ENCODE measurements at regions of chr2 and their contacts with region 1.

Region 1: DNA sequence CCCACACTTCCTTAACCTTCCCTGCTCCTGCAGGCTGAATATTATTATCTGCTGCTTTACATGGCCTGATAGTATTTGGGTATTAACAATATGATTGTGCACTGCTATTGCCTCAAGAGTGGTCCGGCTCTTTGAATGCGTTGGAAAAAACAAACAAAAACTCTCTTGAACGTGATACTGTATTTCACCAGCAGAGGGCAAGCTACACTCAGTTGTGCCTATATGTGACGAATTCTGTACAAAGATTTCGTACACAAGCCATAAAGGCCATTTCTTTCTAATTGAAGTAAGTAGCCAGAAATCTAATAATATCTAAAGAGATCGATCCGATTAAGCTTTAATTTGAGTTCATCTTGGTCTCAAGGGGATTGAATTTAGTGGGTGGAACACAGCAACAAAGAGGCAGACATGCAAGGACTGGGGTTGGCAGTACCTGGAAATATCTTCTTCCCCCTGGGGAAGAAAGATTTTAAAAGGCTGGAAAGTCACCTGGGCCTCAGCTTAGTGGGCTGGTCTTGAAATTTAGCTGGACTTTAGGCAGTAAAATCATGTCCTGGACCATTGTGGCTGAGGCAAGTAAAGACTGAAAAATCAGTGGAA is 49.3 kb upstream of the RAB6D start:
- DNase-seq: peak; percentile 49
- ATAC-seq: peak; percentile 89
- H3K4me3 ChIP-seq: no peak overlapping the region
- H3K27ac ChIP-seq: no peak overlapping the region
- H3K4me1 ChIP-seq: no peaks in the 10 kb centered on the region; a peak in 1 of 4 replicates
- H3K27me3 ChIP-seq: peaks cover 24% of the 10 kb centered on the region
- CTCF ChIP-seq: peak; percentile 65 to 91 (median 84)
- POLR2A ChIP-seq: no peak
- RAD21 ChIP-seq: peak; percentile 90

Region 2: DNA sequence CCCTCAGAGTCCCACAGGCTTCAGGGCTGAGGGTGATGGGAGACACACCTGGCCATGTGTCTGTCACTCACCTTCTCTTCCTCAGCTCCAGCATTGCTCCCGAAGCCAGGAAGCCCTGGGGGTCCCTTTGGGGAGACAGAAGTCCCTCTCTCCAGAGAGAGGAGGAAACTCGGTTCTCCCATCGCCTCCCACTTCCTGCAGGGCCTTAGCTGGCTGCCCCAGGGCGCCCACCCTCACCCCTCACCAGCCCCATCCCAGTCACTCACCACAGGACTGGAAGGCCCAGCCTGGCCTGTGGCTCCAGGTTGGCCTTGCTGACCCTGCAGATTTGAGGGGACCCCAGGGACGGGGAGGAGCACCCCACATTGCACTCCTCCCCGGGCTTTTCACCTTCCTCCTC is 46.6 kb before region 1 on chr2:
- CTCF ChIA-PET with region 1: no interaction called
- POLR2A ChIA-PET with region 1: no interaction called
- RAD21 ChIA-PET with region 1: no interaction called
- intact Hi-C with region 1: no loop called
- DNase-seq: no peak
- ATAC-seq: no peak
- H3K4me3 ChIP-seq: no peak overlapping the region
- H3K27ac ChIP-seq: no peak overlapping the region
- H3K4me1 ChIP-seq: no peaks in the 10 kb centered on the region
- H3K27me3 ChIP-seq: peaks cover 5% of the 10 kb centered on the region; the same call in 1 of the 2 replicates
- CTCF ChIP-seq: no peak
- POLR2A ChIP-seq: no peak
- RAD21 ChIP-seq: no peak

Region 3: DNA sequence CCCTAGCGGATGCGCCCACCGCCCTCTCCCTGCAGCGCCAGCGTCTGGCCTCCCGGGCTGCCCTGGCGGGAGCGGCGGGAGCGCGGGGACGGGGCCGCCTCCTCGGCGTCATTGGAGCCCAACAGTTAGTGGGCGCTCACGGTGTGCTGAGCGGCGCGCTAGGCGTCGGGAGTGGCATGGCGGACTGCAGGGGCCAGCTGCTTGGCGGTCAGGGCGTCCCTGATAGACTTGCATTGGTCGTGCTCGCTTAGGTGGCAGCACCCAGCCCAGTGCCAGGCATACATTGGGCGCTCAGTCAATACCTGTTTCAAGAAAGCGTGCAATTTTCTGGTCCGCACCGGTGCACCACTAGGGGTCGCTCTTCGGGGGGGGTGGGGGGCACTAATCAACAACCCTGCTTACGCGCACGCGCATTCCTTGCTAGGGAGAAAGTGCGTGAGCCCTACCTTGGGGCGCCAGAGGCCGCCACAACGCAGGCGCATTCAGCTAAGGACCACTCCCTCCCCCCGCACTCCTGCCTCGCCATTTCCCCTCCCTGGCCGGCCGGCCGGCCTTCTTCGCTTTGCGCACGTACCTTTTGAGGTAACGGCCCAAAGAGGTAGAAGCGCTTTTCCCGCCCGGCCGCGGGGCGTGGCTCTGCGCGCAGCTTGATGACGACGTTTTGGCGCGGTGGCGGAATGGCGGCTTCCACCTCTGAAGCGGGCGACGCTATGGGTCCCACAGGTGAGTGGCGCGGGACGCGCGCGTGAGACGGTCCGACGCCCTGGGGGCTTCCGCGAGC is 79.4 kb after region 1 on chr2:
- CTCF ChIA-PET with region 1: interaction called, 3 read pairs
- POLR2A ChIA-PET with region 1: no interaction called
- RAD21 ChIA-PET with region 1: no interaction called
- intact Hi-C with region 1: loop called (anchors 1 kb)
- DNase-seq: peak; percentile 95
- ATAC-seq: peak; percentile 83
- H3K4me3 ChIP-seq: peak overlapping the region; percentile 90 to 93
- H3K27ac ChIP-seq: peak overlapping the region; percentile 84
- H3K4me1 ChIP-seq: peaks cover 2 to 26% of the 10 kb centered on the region in 2 experiments; a peak in 2 of 4 replicates
- H3K27me3 ChIP-seq: no peaks in the 10 kb centered on the region
- CTCF ChIP-seq: peak; percentile 74 to 93 (median 89)
- POLR2A ChIP-seq: no peak
- RAD21 ChIP-seq: peak; percentile 7

Region 4: GRCh38 chr2:131521961-131522794 is 108.9 kb after region 1 on chr2:
- CTCF ChIA-PET with region 1: no interaction called
- POLR2A ChIA-PET with region 1: no interaction called
- RAD21 ChIA-PET with region 1: no interaction called
- intact Hi-C with region 1: loop called (anchors 5 kb)
- DNase-seq: no peak
- ATAC-seq: peak; percentile 30
- H3K4me3 ChIP-seq: no peak overlapping the region
- H3K27ac ChIP-seq: no peak overlapping the region
- H3K4me1 ChIP-seq: peaks cover 1 to 2% of the 10 kb centered on the region in 2 experiments; a peak in 3 of 4 replicates
- H3K27me3 ChIP-seq: no peaks in the 10 kb centered on the region
- CTCF ChIP-seq: no peak
- POLR2A ChIP-seq: no peak
- RAD21 ChIP-seq: no peak

Region 5: DNA sequence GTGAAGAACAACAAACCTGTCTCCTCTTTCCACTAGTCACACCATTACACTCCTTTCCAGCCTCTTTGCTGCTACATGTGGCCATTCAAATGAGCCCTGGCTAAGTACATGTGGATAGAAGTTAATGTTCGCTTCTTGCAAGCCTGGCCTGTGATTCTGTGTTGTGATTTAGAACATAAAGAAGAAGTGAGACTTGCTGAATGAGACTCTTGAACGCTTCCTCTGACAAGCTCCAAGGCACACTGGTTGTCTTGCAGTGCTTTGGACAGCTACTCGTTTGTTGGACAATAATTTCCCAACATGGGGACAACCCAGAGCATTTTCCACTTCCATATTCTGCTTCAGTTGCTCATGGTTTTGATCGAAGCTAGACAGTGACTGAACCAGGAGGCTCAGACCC is 171.7 kb after region 1 on chr2:
- CTCF ChIA-PET with region 1: no interaction called
- POLR2A ChIA-PET with region 1: no interaction called
- RAD21 ChIA-PET with region 1: no interaction called
- intact Hi-C with region 1: no loop called
- DNase-seq: no peak
- ATAC-seq: no peak
- H3K4me3 ChIP-seq: no peak overlapping the region
- H3K27ac ChIP-seq: no peak overlapping the region
- H3K4me1 ChIP-seq: no peaks in the 10 kb centered on the region; a peak in 1 of 4 replicates
- H3K27me3 ChIP-seq: peaks cover 90% of the 10 kb centered on the region
- CTCF ChIP-seq: no peak
- POLR2A ChIP-seq: no peak
- RAD21 ChIP-seq: no peak

Region 6: GRCh38 chr2:131673392-131674173 is 260.3 kb after region 1 on chr2:
- CTCF ChIA-PET with region 1: interaction called, 9 read pairs
- POLR2A ChIA-PET with region 1: no interaction called
- RAD21 ChIA-PET with region 1: no interaction called
- intact Hi-C with region 1: loop called (anchors 2 kb)
- DNase-seq: peak; percentile 48
- ATAC-seq: peak; percentile 91
- H3K4me3 ChIP-seq: no peak overlapping the region
- H3K27ac ChIP-seq: no peak overlapping the region; the same call in 1 of the 2 replicates
- H3K4me1 ChIP-seq: peaks cover 7 to 31% of the 10 kb centered on the region in 2 experiments; a peak in 3 of 4 replicates
- H3K27me3 ChIP-seq: no peaks in the 10 kb centered on the region
- CTCF ChIP-seq: peak; percentile 76 to 92 (median 77)
- POLR2A ChIP-seq: no peak
- RAD21 ChIP-seq: peak; percentile 85

Region 7: DNA sequence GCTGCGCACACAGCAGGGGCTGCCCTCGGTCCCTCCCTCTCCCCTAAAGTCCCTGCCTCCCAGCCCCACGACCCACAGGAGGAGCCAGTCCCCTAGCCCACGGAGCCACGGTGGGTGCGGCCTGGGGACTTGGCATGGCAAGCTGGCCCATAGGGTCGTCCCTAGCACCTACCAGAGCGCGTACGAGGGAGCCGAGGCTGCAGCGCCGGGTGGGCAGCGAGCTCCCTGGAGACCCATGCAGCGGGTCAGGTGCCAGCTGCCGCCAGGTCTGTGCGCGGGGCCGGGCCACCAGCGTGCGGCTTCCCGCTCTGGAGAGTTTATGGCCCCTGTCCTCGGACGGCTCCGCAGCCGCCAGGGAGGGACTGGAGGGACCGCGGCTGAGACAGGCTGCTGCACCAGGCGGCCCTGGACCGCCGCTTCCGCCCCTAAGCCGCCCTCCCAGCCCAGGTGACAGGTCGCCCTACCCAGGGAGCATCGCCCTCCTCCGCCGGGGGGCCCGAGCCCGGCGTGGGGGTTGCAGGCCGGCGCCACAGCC is 388.0 kb after region 1 on chr2:
- CTCF ChIA-PET with region 1: no interaction called
- POLR2A ChIA-PET with region 1: no interaction called
- RAD21 ChIA-PET with region 1: no interaction called
- intact Hi-C with region 1: loop called (anchors 5 kb)
- DNase-seq: no peak
- ATAC-seq: no peak
- H3K4me3 ChIP-seq: no peak overlapping the region
- H3K27ac ChIP-seq: no peak overlapping the region
- H3K4me1 ChIP-seq: peaks cover 0 to 7% of the 10 kb centered on the region in 2 experiments; a peak in 3 of 4 replicates
- H3K27me3 ChIP-seq: no peaks in the 10 kb centered on the region
- CTCF ChIP-seq: no peak
- POLR2A ChIP-seq: no peak
- RAD21 ChIP-seq: no peak

Region 8: GRCh38 chr2:131835621-131836091 is 422.4 kb after region 1 on chr2:
- CTCF ChIA-PET with region 1: no interaction called
- POLR2A ChIA-PET with region 1: no interaction called
- RAD21 ChIA-PET with region 1: no interaction called
- intact Hi-C with region 1: loop called (anchors 5 kb)
- DNase-seq: no peak
- ATAC-seq: no peak
- H3K4me3 ChIP-seq: no peak overlapping the region
- H3K27ac ChIP-seq: no peak overlapping the region
- H3K4me1 ChIP-seq: peaks cover 3 to 11% of the 10 kb centered on the region in 2 experiments; a peak in 2 of 4 replicates
- H3K27me3 ChIP-seq: no peaks in the 10 kb centered on the region
- CTCF ChIP-seq: no peak
- POLR2A ChIP-seq: no peak
- RAD21 ChIP-seq: no peak